GM12878 (cell line): ENCODE measurements at regions of chr2 and their contacts with region 1.

Region 1: DNA sequence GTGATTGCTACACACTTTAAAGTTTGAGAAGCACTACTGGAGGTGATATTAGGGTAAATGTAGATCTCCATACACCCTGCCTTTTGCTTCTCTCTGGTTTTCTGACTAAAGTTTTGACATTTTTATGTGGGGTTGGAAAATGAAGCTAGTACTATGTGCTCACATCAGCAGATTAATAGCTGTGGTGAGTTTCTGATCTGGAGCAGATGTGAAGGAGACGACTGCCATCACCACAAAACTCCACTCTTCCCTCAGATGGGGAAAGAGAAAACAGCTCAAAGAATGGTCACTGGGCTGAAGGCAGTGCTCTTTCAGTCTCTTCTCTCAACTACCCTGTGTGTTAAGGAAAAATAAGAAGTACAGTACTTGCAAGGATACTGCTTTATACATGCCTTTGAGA is 37.2 kb downstream of the PLEKHA3 start:
- DNase-seq: no peak
- ATAC-seq: no peak
- H3K4me3 ChIP-seq: no peak overlapping the region
- H3K27ac ChIP-seq: no peak overlapping the region
- H3K4me1 ChIP-seq: no peaks in the 10 kb centered on the region
- H3K27me3 ChIP-seq: no peaks in the 10 kb centered on the region
- CTCF ChIP-seq: no peak
- EP300 ChIP-seq: no peak
- POLR2A ChIP-seq: no peak
- RAD21 ChIP-seq: no peak

Region 2: DNA sequence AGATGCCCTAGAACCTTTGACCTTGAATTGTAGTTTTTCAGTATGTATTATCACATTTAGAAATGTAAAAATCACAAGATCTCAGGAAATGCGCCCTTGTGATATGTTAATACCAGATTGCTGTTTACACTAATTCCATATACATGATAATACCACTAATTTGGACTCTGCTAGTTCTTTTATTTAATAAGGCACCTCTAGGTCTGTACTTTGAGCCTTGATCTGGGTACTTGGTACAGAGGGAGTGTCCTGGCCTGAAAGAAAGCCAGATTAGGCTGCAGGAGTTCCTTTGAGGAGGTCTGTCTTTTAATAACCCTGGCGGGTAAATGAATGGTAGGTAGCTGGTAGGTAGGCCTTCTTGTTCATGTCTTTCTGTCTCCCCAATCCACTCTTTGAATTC is 11.0 kb before region 1 on chr2:
- CTCF ChIA-PET with region 1: interaction called, 6 read pairs
- POLR2A ChIA-PET with region 1: interaction called, 3 read pairs
- RAD21 ChIA-PET with region 1: no interaction called
- SMC1A ChIA-PET with region 1: interaction called, 16 read pairs
- in situ Hi-C with region 1: no loop called
- intact Hi-C with region 1: no loop called
- DNase-seq: no peak
- ATAC-seq: no peak
- H3K4me3 ChIP-seq: no peak overlapping the region
- H3K27ac ChIP-seq: no peak overlapping the region
- H3K4me1 ChIP-seq: no peaks in the 10 kb centered on the region
- H3K27me3 ChIP-seq: no peaks in the 10 kb centered on the region
- CTCF ChIP-seq: no peak
- EP300 ChIP-seq: no peak
- POLR2A ChIP-seq: no peak
- RAD21 ChIP-seq: no peak